ENCODE measurements at regions of chr11 and their contacts with region 1.

Region 1: DNA sequence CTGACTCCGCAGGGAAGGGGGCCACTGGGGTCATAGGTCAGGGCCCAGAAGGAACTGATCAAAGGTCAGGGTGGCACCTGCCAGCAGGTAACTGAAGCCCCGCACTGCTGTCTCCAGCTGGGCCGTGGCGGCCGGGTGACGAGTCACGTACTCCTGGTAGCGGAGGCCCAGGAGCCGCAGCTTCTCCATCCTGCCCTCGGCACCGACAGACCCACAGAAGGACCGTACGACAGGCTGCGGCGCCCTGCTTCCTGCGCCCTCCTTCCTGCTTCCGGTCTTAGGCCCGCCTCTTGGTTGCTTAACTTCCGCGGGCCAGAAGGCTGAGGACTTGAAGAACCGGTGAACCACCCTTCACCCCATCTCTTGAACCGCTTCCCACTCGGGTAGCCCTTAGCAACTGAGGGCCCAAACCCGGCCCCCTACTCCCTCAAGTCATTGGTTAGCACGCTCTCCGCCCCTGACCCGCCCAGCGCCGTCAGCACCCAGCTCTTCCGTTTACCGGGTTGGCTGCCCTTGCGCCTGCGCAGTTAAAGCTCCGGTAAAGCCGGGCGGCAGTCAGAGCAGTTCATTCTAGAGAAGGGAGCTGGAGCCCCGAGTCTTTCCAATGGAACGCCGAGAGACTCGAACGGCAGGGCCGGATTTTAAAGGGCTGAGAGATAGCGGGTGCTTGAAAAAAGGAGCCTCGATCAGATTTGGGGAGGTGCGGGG is at the start of gene PEX16:
- DNase-seq: peak; percentile 99
- H3K4me3 ChIP-seq: peak within 1 kb of the TSS; percentile 66 to 92 (median 84)
- H3K27ac ChIP-seq: peak within 1 kb of the TSS; percentile 56
- H3K4me1 ChIP-seq: peaks cover 11% of the 10 kb centered on the region
- H3K27me3 ChIP-seq: no peaks in the 10 kb centered on the region
- CTCF ChIP-seq: no peak
- total RNA-seq, gene PEX16: 28.5 to 30.9 TPM

Region 2: GRCh38 chr11:45097721-45098493 is 819.9 kb before region 1 on chr11:
- CTCF ChIA-PET with region 1: no interaction called
- dilution Hi-C with region 1: no loop called
- in situ Hi-C with region 1: no loop called
- intact Hi-C with region 1: no loop called
- DNase-seq: peak; percentile 51
- H3K4me3 ChIP-seq: no peak overlapping the region
- H3K27ac ChIP-seq: no peak overlapping the region
- H3K4me1 ChIP-seq: peaks cover 20% of the 10 kb centered on the region
- H3K27me3 ChIP-seq: no peaks in the 10 kb centered on the region
- CTCF ChIP-seq: no peak

Region 3: DNA sequence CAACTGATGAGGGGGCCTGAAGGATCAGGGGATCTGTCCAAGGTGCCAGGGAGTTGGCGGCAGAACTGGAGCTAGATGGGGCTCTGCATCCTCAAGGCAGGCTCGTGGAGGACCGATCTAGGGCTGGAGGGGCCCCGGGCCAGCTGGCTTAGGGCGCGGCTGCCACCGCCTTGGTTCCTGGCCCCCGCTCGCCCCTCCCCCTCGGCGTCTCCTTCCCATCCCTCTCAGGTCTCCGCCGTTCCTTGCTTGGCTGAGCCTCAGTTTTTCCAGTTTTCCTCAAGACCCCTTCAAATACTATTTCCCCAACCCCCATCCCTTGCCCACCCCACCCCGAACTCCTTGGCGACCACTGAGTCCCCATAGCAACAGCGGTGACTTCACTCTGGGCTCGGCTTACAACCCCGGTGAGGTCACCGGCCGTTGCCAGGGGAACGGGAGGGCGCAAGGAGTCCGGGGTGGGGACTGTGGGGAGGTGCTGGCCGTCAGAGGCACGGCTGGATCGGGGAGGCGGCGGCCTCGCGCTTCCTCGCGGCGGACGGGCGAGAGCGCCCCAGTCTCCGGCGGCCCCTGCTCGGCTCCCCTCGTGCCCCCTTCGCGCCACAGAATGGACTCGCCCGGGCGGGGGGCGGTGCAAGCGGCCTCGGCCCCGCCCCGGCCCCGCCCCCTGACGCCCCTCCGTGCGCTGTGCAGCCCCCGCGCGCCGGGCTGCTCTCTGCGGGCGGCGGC is 18.2 kb before region 1 on chr11:
- CTCF ChIA-PET with region 1: no interaction called
- dilution Hi-C with region 1: no loop called
- in situ Hi-C with region 1: no loop called
- intact Hi-C with region 1: loop called (anchors 2 kb)
- DNase-seq: peak; percentile 80
- H3K4me3 ChIP-seq: peak overlapping the region; percentile 32 to 57 (median 49)
- H3K27ac ChIP-seq: peak overlapping the region; percentile 22
- H3K4me1 ChIP-seq: peaks cover 13% of the 10 kb centered on the region
- H3K27me3 ChIP-seq: no peaks in the 10 kb centered on the region
- CTCF ChIP-seq: no peak